ENCODE measurements at regions of chr20 and their contacts with region 1.

Region 1: GRCh38 chr20:25136643-25137559 is 55.0 kb upstream of the VSX1 start:
- DNase-seq: peak; percentile 39
- ATAC-seq: peak; percentile 93
- H3K4me3 ChIP-seq: no peak overlapping the region
- H3K27ac ChIP-seq: peak overlapping the region; percentile 87
- H3K4me1 ChIP-seq: peaks cover 55% of the 10 kb centered on the region
- H3K27me3 ChIP-seq: no peaks in the 10 kb centered on the region
- CTCF ChIP-seq: no peak

Region 2: DNA sequence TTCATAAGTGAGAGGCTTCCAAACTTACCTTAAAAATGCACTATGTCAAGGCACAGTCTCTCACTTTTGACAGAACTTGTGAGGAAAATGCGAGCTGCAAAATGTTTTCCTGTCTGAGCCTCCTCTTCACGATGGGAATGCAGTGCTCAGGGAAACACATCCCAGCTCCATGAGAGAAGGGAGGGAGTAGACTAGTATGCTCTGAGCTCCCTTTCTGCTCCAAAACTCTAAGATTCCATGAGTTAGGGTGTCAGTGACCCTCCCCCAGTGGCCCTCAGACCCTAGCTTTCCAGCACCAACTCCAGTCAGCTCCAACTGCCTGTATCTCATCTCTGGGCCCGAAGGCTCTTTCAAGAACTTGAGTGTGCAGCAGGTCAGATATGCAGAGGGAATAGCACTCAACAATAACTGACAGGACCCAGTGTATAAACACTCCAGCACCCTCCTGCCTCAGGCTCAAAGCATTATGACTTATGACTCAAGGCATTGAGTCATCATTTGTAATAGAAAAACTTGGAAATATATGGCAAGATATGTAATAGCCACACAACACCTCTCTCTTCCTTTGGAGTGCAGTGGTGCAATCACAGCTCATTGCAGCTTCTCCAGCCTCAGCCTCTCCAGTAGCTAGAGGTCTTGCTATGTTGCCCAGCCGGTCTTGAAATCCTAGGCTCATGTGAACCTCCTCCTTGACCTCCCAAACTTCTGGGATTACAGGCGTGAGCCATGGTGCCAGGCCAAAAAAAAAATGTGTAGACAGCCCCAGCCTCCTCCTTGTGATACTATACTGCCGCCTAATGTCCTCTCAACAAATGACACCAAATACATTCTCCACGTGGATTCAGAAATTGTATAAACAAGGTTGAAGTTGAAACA is 41.9 kb after region 1 on chr20:
- CTCF ChIA-PET with region 1: interaction called, 3 read pairs
- POLR2A ChIA-PET with region 1: no interaction called
- in situ Hi-C with region 1: no loop called
- intact Hi-C with region 1: loop called (anchors 2 kb)
- DNase-seq: peak; percentile 90
- ATAC-seq: peak; percentile 93
- H3K4me3 ChIP-seq: peak overlapping the region in 1 of 2 experiments; percentile 29; a peak in 2 of 4 replicates
- H3K27ac ChIP-seq: peak overlapping the region; percentile 76
- H3K4me1 ChIP-seq: peaks cover 35% of the 10 kb centered on the region
- H3K27me3 ChIP-seq: no peaks in the 10 kb centered on the region
- CTCF ChIP-seq: peak; percentile 95

Region 3: GRCh38 chr20:25195014-25195961 is 58.4 kb after region 1 on chr20 and contains the start of gene ENTPD6:
- CTCF ChIA-PET with region 1: interaction called, 14 read pairs
- POLR2A ChIA-PET with region 1: no interaction called
- in situ Hi-C with region 1: no loop called
- intact Hi-C with region 1: no loop called
- DNase-seq: peak; percentile 24
- ATAC-seq: peak; percentile 90
- H3K4me3 ChIP-seq: peak within 1 kb of the TSS; percentile 77 to 85
- H3K27ac ChIP-seq: peak within 1 kb of the TSS; percentile 92
- H3K4me1 ChIP-seq: peaks cover 39% of the 10 kb centered on the region
- H3K27me3 ChIP-seq: no peaks in the 10 kb centered on the region
- CTCF ChIP-seq: peak; percentile 58
- total RNA-seq, gene ENTPD6: 108 TPM

Measured in Panc1 (cell line).